ENCODE measurements at regions of chr7 and their contacts with region 1.

Region 1: DNA sequence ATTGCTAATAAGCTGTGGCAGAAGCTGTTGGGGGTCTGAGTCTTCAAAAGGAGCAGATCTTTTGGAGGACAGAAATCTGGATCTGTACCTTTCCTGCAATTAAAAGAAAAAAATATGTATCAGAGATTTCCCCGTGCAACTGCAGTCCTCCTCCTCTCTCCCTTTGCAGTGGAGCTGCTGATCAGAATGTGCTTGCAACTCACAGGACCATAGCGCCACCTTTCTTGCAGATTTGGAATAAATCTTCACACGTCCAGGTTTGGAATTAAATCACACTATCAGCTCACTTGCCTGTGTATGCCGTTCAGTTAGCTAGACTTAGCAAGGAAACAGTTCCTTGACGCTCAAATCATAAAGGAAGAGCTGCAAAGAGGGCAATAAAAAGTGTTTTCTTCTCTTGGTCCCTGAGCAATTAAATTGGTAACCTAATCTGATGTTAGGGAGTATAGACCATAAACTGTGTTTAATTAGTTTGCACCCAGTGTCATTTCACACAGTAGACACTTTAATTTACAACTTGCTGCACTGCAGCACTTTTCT is 77.4 kb downstream of the PON1 start:
- DNase-seq: peak; percentile 71
- H3K4me3 ChIP-seq: no peak overlapping the region
- H3K27ac ChIP-seq: no peak overlapping the region
- H3K4me1 ChIP-seq: no peaks in the 10 kb centered on the region
- H3K27me3 ChIP-seq: no peaks in the 10 kb centered on the region
- CTCF ChIP-seq: peak; percentile 63 to 68
- POLR2A ChIP-seq: no peak

Region 2: GRCh38 chr7:95267754-95268153 is 20.9 kb after region 1 on chr7:
- CTCF ChIA-PET with region 1: interaction called, 11 read pairs
- POLR2A ChIA-PET with region 1: no interaction called
- dilution Hi-C with region 1: no loop called
- intact Hi-C with region 1: no loop called
- DNase-seq: no peak
- H3K4me3 ChIP-seq: no peak overlapping the region
- H3K27ac ChIP-seq: no peak overlapping the region
- H3K4me1 ChIP-seq: no peaks in the 10 kb centered on the region
- H3K27me3 ChIP-seq: no peaks in the 10 kb centered on the region
- CTCF ChIP-seq: no peak
- POLR2A ChIP-seq: no peak